Activated CD4-positive, alpha-beta memory T cell treated with anti-CD3 and anti-CD28 coated beads, Interleukin-2, amount 10 ng/mL, durations not matched to agents 7 days and 5 days (primary cell): ENCODE measurements at regions of chr10 and their contacts with region 1.

Region 1: DNA sequence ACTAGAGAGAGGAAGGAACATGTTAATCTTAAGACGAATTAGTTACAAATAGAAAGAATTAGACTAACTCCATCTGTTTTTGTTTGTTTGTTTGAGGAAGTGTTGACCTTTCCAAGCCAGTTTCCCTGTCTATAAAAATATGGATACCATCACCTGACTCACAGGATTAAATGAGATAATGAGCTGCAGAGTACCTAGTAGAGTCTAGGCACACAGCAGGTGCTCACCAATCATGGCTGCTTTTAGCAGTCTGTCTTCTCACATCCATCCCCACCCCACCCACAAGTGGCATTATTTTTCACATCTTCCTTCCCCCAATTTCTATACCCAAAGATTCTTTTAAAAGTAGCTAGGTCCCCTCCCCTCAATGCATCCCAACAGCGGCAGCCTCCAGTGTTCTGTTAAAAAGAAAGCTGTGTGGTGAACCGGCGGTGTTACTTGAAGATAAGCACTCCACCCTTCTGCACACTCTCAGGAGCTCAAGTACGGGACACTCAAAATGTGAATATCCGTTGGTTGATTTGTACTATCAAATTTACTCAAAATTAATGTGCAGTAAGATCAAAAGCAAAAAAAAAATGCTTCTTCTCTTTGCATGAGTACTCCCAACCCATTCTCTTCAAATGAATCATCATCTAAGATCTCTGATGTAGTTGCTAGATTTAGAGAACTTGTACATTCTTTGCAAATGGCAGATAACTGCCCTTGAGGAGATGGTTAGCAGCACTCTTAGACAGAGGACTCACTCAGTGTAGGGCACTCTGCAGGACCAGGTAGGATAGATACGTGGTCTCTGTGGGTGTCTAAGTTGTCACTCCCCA is 145.4 kb upstream of the ASAH2 start:
- DNase-seq: peak; percentile 35
- H3K4me3 Mint-ChIP-seq: peak overlapping the region; percentile 49
- H3K27ac Mint-ChIP-seq: peak overlapping the region; percentile 85
- H3K4me1 Mint-ChIP-seq: peaks cover 59% of the 10 kb centered on the region
- H3K27me3 Mint-ChIP-seq: no peaks in the 10 kb centered on the region

Region 2: DNA sequence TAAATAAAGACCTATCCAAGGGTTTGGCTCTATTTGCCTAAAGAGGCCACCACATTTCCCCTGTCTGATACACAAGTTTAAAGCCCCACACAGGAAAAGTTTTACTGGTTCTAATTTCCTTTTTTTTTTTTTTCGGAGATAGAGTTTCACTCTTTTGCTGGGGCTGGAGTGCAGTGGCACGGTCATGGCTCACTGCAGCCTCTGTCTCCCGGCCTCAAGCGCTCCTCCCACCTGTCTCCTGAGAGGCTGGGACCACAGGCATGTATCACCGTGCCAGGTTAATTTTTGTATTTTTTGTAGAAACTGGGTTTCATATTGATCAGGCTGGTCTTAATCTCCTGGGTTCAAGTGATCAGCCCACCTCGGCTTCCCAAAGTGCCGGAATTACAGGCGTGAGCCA is 92.0 kb before region 1 on chr10:
- CTCF ChIA-PET with region 1: no interaction called
- POLR2A ChIA-PET with region 1: no interaction called
- DNase-seq: no peak
- H3K4me3 Mint-ChIP-seq: no peak overlapping the region
- H3K27ac Mint-ChIP-seq: no peak overlapping the region
- H3K4me1 Mint-ChIP-seq: peaks cover 3% of the 10 kb centered on the region
- H3K27me3 Mint-ChIP-seq: no peaks in the 10 kb centered on the region

Region 3: DNA sequence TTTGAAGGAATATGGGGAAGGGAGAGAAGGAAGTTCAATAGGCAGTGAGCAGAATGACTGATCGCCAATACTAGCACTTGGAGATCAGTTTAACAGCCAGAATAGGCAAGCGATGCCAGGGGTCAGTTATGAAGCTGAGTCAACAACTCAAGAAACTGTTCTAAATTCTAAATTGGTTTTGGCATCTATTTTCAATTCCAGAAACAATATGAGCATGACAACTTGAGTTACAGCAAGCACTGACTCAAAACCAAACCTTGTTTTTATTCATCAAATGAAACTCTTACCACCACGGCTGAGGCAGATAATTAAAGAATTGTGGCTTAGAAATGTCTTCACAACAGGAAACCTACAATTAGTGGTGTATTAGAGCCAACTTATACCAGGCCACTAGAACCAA is 35.1 kb after region 1 on chr10:
- CTCF ChIA-PET with region 1: no interaction called
- POLR2A ChIA-PET with region 1: interaction called, 10 read pairs
- DNase-seq: peak; percentile 25
- H3K4me3 Mint-ChIP-seq: peak overlapping the region; percentile 15
- H3K27ac Mint-ChIP-seq: peak overlapping the region; percentile 60
- H3K4me1 Mint-ChIP-seq: peaks cover 30% of the 10 kb centered on the region
- H3K27me3 Mint-ChIP-seq: peaks cover 2% of the 10 kb centered on the region

Region 4: DNA sequence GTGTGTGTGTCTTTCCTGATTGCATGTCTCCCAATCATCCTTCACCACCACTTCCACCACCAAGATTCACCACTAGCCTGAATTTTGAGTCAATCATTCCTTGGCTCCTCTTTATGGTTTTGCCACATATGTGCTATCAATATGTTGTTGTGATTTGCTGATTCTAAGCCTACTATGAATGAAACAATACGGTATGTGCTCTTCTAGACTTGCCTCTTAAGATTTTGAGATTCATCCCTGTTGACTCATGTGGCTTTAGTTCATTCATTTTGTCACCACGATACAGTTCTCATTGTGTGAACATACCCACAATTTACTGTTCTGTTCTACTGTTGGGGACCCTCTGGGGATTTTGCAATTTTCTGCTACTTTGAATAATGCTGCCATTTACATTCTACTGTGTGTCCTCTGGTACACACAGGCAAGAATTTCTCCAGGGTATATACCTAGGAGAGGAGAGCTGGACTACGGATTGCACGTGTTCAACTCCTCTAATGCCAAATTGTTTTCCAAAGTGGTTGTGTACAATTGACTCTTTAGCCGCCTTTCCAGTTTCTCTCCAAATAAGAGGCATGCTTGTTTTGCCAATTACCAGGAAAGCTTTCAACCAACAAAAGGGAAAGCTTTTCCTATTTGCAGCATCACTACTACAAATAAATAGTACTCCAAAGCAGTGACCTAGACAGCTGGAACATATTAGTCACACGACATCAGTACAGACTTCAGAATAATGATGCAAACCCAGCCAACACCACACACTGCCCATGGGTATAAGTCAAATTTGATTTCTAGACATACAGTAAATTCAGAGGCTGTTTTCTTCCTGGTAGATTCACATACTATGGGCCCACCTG is 197.0 kb after region 1 on chr10:
- CTCF ChIA-PET with region 1: no interaction called
- POLR2A ChIA-PET with region 1: no interaction called
- DNase-seq: no peak
- H3K4me3 Mint-ChIP-seq: no peak overlapping the region
- H3K27ac Mint-ChIP-seq: no peak overlapping the region
- H3K4me1 Mint-ChIP-seq: no peaks in the 10 kb centered on the region
- H3K27me3 Mint-ChIP-seq: no peaks in the 10 kb centered on the region